ENCODE measurements at regions of chr10 and their contacts with region 1.

Region 1: GRCh38 chr10:103685880-103686669 is 169.3 kb downstream of the SH3PXD2A start:
- DNase-seq: peak; percentile 55 to 91
- ATAC-seq: peak; percentile 79 to 90
- H3K4me3 ChIP-seq: no peak overlapping the region
- H3K27ac ChIP-seq: no peak overlapping the region
- H3K4me1 ChIP-seq: peaks cover 14% of the 10 kb centered on the region
- CTCF ChIP-seq: peak; percentile 79
- EP300 ChIP-seq: no peak
- POLR2A ChIP-seq: no peak
- RAD21 ChIP-seq: peak; percentile 73 to 79

Region 2: DNA sequence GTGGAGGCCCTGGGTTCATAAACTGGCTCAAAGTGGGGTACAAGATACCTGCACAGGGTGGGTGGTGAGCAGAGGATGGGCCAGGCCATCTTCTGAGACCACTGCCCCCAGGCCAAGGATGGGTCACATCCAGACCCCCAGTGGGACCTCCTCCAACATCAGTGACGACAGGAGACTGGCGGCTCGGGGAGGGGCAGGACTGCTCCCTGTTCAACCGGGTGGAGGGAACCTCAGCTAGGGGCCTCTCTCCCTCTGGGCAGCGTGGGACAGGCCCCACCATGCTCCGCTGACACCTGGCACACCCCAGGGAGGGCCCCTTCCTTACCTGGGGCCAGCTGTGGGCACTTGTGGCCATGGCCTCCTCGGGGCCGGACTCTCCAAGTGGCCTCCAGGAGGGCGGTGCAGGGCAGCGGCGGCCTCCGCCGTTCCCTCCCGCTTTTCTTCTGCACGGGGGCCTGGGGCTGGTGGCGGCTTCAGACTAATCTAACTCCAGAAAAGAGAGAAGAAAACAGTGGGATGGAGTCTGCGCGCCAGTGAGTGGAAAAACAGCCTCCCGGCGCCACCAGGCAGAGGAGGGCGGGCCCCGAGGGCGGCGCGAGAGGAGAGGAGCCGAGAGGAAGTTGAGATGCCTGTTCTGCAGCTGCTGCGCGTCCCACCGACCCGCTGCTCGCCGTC is 234.1 kb before region 1 on chr10 and contains the start of gene CALHM2:
- CTCF ChIA-PET with region 1: no interaction called
- POLR2A ChIA-PET with region 1: no interaction called
- DNase-seq: peak; percentile 31 to 61
- ATAC-seq: peak; percentile 57 to 79
- H3K4me3 ChIP-seq: peak within 1 kb of the TSS; percentile 42
- H3K27ac ChIP-seq: peak within 1 kb of the TSS; percentile 62 to 81
- H3K4me1 ChIP-seq: peaks cover 18% of the 10 kb centered on the region; the same call in 2 of the 3 replicates
- CTCF ChIP-seq: no peak
- EP300 ChIP-seq: no peak
- POLR2A ChIP-seq: no peak
- RAD21 ChIP-seq: no peak
- polyA plus RNA-seq, gene CALHM2: 2.5 and 3.6 TPM in 2 replicates

Region 3: DNA sequence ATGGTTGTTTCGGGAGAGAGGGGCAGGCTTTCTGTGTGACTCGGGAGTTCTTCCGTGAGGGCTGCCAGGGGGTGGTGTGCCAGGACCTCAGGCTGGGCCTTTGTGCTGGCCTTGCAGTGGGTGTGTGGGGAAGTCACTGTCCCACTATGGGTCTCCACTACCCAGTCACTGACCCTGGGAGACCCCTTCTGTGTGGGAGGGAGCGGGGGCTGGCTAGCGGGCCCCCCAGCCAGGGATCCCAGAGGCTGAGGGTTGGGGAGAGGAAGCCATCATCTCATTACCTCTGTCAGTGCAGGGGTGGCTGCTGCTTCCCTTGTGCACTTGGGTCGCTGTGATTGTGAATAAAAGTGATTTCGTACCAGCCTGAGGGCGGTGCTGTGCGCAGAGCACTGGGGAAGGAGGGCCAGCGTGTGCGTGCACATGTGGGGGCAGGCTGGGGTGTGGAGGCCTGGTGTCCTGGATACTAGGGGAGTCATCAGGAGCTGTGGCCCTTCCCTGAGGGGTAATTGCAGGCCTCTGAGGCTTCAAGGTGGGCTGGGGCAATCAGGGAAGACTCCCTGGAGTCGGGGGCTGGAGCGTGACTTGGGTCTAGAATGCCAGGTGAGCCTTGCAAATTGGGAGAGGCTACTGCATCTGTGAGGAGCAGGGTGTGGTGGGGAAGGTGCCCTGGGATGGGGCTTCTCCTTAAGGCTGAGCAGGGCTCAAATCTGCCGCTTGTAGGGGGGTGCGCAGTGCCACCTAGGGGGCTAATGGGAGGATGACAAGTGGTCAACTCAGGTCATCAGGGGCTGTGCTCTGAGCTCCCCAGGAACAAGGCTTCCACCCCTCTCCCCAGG is 93.7 kb before region 1 on chr10:
- CTCF ChIA-PET with region 1: interaction called, 265 read pairs
- POLR2A ChIA-PET with region 1: no interaction called
- DNase-seq: peak; percentile 56 to 94
- ATAC-seq: peak; percentile 80 to 94
- H3K4me3 ChIP-seq: no peak overlapping the region
- H3K27ac ChIP-seq: no peak overlapping the region
- H3K4me1 ChIP-seq: no peaks in the 10 kb centered on the region
- CTCF ChIP-seq: peak; percentile 77
- EP300 ChIP-seq: no peak
- POLR2A ChIP-seq: no peak
- RAD21 ChIP-seq: peak; percentile 76 to 86

Region 4: DNA sequence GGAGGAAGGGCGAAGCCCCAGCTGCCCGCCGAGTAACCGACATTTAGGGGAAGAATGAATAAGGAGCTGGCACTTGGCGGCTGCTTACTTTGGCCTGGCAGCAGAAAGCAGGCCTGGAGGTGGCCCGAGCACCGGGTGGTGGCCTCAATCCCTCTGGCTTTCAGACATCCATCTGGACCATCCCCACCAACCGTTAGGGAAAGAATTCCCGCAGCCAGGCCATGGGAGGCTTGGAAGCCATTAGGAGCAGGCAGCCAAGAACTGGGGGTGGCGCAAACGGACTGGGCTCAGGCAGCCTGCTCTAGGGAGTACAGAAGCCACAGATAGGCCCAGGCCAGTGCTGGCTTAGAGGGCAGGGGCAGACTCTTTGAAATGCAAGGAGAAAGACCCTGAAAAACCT is 59.9 kb before region 1 on chr10:
- CTCF ChIA-PET with region 1: interaction called, 16 read pairs
- POLR2A ChIA-PET with region 1: no interaction called
- DNase-seq: no peak
- ATAC-seq: no peak
- H3K4me3 ChIP-seq: no peak overlapping the region
- H3K27ac ChIP-seq: no peak overlapping the region
- H3K4me1 ChIP-seq: no peaks in the 10 kb centered on the region
- CTCF ChIP-seq: no peak
- EP300 ChIP-seq: no peak
- POLR2A ChIP-seq: no peak
- RAD21 ChIP-seq: no peak

Region 5: DNA sequence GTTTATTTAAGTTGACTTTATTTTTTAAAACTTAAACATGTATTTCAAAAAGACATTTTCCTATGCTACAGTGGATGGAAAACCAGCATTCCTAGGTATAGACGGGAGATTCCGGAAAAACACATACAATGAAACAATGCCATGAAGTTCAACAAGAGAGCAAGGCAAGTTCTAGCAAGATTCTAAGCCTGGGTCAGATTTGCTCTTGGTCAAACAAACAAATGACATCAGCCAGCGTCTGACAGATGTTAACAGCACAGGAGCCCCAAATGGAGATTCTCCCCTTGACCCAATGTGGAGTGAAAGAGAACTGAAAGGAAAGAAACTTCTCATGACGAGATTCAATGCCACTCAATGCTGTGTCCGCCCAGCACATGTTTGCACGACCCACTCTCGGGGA is 42.7 kb before region 1 on chr10:
- CTCF ChIA-PET with region 1: interaction called, 21 read pairs
- POLR2A ChIA-PET with region 1: no interaction called
- DNase-seq: no peak
- ATAC-seq: no peak
- H3K4me3 ChIP-seq: no peak overlapping the region
- H3K27ac ChIP-seq: no peak overlapping the region
- H3K4me1 ChIP-seq: no peaks in the 10 kb centered on the region; the same call in 2 of the 3 replicates
- CTCF ChIP-seq: no peak
- EP300 ChIP-seq: no peak
- POLR2A ChIP-seq: no peak
- RAD21 ChIP-seq: no peak

Region 6: DNA sequence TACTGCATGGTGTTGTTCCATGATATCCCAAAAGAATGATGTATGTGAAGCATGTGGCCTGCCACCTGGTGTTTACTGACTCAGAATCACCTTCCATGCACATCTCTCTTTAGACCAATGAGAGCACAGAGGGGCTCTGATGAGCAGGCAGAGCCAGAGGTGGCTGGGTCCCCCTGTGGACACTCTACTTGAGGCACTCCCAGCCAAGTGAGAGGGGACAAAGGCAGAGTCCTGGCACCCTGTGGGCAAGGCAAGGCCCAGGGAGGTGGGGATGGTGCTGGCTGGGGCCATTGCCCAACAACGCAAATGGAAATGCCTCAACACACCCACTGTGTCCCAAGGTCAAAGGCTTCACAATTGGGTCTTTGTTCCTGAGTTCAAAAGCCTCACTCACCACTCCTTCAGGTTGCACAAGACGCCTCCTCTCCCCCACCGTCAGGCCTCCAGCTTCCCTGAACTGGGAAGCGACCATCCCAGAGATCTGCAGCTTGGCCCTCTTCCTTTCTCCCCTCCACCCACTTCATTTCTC is 28.0 kb before region 1 on chr10:
- CTCF ChIA-PET with region 1: interaction called, 11 read pairs
- POLR2A ChIA-PET with region 1: no interaction called
- DNase-seq: no peak
- ATAC-seq: no peak
- H3K4me3 ChIP-seq: no peak overlapping the region
- H3K27ac ChIP-seq: no peak overlapping the region
- H3K4me1 ChIP-seq: no peaks in the 10 kb centered on the region
- CTCF ChIP-seq: no peak
- EP300 ChIP-seq: no peak
- POLR2A ChIP-seq: no peak
- RAD21 ChIP-seq: no peak

Region 7: GRCh38 chr10:103671122-103671895 is 14.8 kb before region 1 on chr10:
- CTCF ChIA-PET with region 1: interaction called, 22 read pairs
- POLR2A ChIA-PET with region 1: no interaction called
- DNase-seq: no peak
- ATAC-seq: no peak
- H3K4me3 ChIP-seq: no peak overlapping the region
- H3K27ac ChIP-seq: no peak overlapping the region
- H3K4me1 ChIP-seq: peaks cover 13% of the 10 kb centered on the region
- CTCF ChIP-seq: no peak
- EP300 ChIP-seq: no peak
- POLR2A ChIP-seq: no peak
- RAD21 ChIP-seq: no peak

Measured in A549 (cell line).